ENCODE measurements at regions of chr19 and their contacts with region 1.

Region 1: GRCh38 chr19:11242864-11243797 is 3.7 kb downstream of the ANGPTL8 start:
- DNase-seq: peak; percentile 84
- H3K4me3 ChIP-seq: peak overlapping the region; percentile 11
- H3K27ac ChIP-seq: no peak overlapping the region
- H3K4me1 ChIP-seq: peaks cover 9% of the 10 kb centered on the region
- H3K27me3 ChIP-seq: no peaks in the 10 kb centered on the region
- CTCF ChIP-seq: peak; percentile 93

Region 2: DNA sequence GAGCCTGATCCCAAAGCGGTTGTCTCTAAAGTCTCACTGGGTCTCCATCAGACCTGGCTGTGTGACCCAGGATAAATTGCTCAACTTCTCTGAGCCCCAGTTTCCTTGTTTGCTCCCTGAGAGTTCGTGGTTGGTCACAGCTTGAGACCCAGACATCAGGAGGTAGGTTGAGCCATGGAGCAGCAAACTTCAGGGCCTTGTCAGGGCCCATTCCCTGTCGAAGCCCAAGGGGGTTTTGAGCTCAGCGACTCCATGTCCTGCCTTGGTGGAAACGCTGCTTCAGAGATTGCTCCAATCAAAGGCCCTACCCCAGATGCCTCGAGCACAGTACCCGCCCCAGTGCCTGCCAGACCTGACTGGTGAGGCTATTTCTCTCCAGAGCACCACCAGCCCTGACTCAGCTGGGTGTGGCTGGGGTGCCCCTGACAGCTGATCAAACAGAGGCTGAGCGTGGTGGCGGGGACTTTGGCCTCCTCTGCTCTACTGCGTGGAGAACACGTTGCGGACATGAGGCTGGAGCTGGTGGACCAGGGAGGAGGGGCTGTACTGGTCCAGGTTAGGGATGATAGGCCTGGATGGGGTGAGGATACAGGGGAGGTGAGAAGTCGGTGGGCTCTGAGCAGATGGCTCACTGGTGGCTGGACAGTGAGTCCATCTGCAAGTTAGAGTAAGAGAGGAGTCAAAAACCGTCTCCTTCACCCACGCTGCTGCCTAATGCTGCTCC is 22.5 kb after region 1 on chr19:
- CTCF ChIA-PET with region 1: interaction called, 11 read pairs
- POLR2A ChIA-PET with region 1: no interaction called
- intact Hi-C with region 1: no loop called
- DNase-seq: no peak
- H3K4me3 ChIP-seq: no peak overlapping the region
- H3K27ac ChIP-seq: no peak overlapping the region
- H3K4me1 ChIP-seq: peaks cover 9% of the 10 kb centered on the region
- H3K27me3 ChIP-seq: no peaks in the 10 kb centered on the region
- CTCF ChIP-seq: no peak

Region 3: DNA sequence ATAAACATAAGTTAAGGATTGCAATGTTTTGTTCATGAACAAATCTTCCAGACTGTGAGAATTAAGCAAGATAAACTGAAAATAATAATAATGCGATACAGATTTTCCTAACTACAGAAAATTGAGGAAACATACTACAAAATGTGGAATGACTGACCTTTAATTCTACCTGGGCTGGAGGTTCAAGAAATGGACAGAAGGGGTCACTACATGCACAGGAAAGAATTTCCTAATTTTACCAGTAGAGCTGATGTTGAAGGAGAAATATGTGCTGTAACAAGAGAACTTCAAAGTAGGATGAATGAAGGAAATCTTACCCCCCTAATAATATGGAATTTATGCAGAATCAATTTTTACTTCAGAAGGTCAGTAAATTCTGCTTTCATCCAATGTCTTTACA is 416.5 kb after region 1 on chr19:
- CTCF ChIA-PET with region 1: no interaction called
- POLR2A ChIA-PET with region 1: no interaction called
- intact Hi-C with region 1: no loop called
- DNase-seq: no peak
- H3K4me3 ChIP-seq: no peak overlapping the region
- H3K27ac ChIP-seq: no peak overlapping the region
- H3K4me1 ChIP-seq: no peaks in the 10 kb centered on the region
- H3K27me3 ChIP-seq: no peaks in the 10 kb centered on the region
- CTCF ChIP-seq: 0 out of 2 replicates have a peak, but pooled peaks have one; percentile 28

Measured in A673 (cell line).